ENCODE measurements at regions of chr6 and their contacts with region 1.

Region 1: GRCh38 chr6:3825851-3826581 is 23.2 kb upstream of the FAM50B start:
- DNase-seq: peak; percentile 90 to 99
- H3K4me3 ChIP-seq: peak overlapping the region; percentile 18 to 40
- H3K27ac ChIP-seq: peak overlapping the region; percentile 89 to 93
- H3K4me1 ChIP-seq: peaks cover 18 to 46% of the 10 kb centered on the region in 2 donors
- H3K27me3 ChIP-seq: no peaks in the 10 kb centered on the region
- CTCF ChIP-seq: no peak

Region 2: GRCh38 chr6:3471711-3472110 is 354.3 kb before region 1 on chr6:
- intact Hi-C with region 1: no loop called
- DNase-seq: no peak
- H3K4me3 ChIP-seq: no peak overlapping the region
- H3K27ac ChIP-seq: no peak overlapping the region
- H3K4me1 ChIP-seq: no peaks in the 10 kb centered on the region
- H3K27me3 ChIP-seq: no peaks in the 10 kb centered on the region
- CTCF ChIP-seq: no peak

Region 3: GRCh38 chr6:3751730-3752542 is 74.1 kb before region 1 on chr6:
- intact Hi-C with region 1: loop called (anchors 1 kb)
- DNase-seq: peak; percentile 59 to 96
- H3K4me3 ChIP-seq: peak overlapping the region; percentile 81 to 82
- H3K27ac ChIP-seq: peak overlapping the region; percentile 100
- H3K4me1 ChIP-seq: peaks cover 0 to 3% of the 10 kb centered on the region in 2 donors
- H3K27me3 ChIP-seq: no peaks in the 10 kb centered on the region
- CTCF ChIP-seq: peak; percentile 33 to 50 (median 47)

Region 4: DNA sequence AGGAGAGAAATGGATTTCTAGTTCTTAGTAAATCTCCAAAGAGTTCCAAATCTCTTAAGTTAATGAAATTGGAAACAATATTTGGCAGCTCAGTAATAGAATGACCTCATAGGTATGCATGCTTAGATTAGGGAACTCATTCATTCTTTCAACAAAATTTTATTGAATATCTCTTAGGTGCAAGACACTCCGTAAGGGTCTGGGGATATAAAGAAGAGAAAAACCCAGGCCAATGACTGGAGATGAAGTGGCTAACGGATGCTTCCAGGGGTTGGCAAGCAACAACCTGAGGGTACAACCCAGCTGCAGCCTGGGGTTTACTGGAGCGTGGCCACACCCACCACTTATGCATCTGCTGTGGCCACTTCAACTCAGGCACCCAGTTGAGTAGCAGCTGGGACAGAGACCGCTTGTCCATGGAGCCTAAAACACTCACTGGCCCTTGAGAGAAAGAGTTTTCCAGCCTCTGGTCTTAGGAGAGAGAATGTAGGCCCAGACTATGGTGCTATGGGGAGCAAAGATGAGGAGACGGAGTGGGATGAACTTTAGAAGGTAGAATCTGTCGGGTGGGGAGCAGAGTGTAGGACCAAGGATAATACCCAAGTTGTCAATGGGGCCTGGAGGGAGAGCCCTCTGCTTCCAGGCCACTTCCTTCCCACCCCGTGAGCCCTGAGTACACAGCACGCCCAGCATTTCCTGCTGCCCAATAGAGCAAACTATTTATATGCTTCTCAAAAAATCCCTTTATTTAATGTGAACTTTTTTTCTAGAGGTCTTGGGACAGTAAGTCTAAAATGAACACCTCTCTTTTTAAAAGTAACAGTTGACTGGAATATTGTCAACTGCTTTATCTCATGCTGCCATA is 27.7 kb before region 1 on chr6:
- intact Hi-C with region 1: loop called (anchors 1 kb)
- DNase-seq: no peak
- H3K4me3 ChIP-seq: no peak overlapping the region
- H3K27ac ChIP-seq: peak overlapping the region; percentile 19 to 61
- H3K4me1 ChIP-seq: peaks cover 11 to 29% of the 10 kb centered on the region in 2 donors
- H3K27me3 ChIP-seq: no peaks in the 10 kb centered on the region
- CTCF ChIP-seq: no peak

Region 5: DNA sequence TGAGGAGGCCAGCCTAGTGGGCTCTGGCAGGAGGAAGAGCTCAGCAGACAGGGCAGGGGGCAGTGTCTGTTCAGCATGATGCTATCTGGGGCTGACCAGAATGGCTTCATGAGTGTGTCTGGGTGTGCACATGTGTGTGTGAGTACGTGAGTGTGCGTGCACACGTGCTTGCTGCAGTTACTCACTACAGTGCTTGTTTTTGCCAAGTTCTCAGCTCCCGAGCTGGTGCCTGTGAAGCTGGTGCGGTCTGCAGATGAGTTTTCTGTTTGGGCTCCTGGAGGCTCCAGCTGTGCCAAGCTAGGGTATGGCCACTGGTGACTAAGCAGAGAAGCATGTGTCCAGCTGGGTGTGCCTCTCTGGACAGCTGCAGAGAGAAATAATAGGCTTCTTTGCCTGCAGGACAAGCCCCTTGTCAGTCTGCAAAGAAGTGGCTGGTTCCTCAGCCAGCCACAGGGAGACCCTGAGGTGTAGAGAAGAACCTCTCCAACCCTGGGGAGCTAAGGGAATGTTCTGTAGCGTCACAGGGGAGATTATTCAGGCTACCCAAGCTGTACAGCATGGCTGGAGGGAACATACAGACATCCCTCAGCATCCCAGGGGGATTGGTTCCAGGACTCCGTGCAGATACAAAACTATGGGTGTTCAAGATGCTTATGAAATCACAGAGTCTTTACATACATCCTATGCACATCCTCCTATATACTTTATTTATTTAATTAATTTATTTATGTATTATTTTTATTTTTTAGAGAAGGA is 17.1 kb before region 1 on chr6:
- intact Hi-C with region 1: loop called (anchors 2 kb)
- DNase-seq: peak; percentile 54 to 93
- H3K4me3 ChIP-seq: peak overlapping the region in 1 of 2 donors; percentile 3
- H3K27ac ChIP-seq: peak overlapping the region; percentile 86 to 94
- H3K4me1 ChIP-seq: peaks cover 13 to 47% of the 10 kb centered on the region in 2 donors
- H3K27me3 ChIP-seq: no peaks in the 10 kb centered on the region
- CTCF ChIP-seq: no peak

Region 6: GRCh38 chr6:3841711-3842565 is 15.9 kb after region 1 on chr6:
- intact Hi-C with region 1: loop called (anchors 1 kb)
- DNase-seq: peak in 1 of 2 donors; percentile 79
- H3K4me3 ChIP-seq: no peak overlapping the region
- H3K27ac ChIP-seq: peak overlapping the region; percentile 85 to 91
- H3K4me1 ChIP-seq: peaks cover 7 to 40% of the 10 kb centered on the region in 2 donors
- H3K27me3 ChIP-seq: no peaks in the 10 kb centered on the region
- CTCF ChIP-seq: no peak

Region 7: GRCh38 chr6:3868544-3868943 is 42.5 kb after region 1 on chr6:
- intact Hi-C with region 1: no loop called
- DNase-seq: no peak
- H3K4me3 ChIP-seq: no peak overlapping the region
- H3K27ac ChIP-seq: peak overlapping the region; percentile 39 to 41
- H3K4me1 ChIP-seq: peaks cover 0 to 7% of the 10 kb centered on the region in 2 donors
- H3K27me3 ChIP-seq: no peaks in the 10 kb centered on the region
- CTCF ChIP-seq: no peak

Region 8: DNA sequence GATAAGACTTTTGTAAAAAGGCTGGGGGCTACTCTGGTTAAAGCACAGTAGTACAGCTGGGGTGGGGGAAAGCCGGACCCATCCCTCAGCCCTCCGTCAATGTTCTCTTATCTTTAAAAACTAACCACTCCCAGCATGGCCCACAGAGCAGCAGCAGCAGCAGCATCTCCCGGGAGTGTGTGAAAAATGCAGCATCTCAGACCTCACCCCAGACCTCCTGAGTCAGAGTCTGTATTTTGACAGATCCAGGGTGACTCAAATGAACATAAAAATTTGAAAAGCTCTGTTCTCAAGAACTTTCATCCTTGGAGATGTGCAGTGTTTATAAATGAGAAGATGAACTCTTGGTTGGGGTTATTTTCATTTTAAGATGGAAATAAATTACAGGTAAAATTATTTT is 587.1 kb after region 1 on chr6:
- intact Hi-C with region 1: no loop called
- DNase-seq: no peak
- H3K4me3 ChIP-seq: no peak overlapping the region
- H3K27ac ChIP-seq: no peak overlapping the region
- H3K4me1 ChIP-seq: no peaks in the 10 kb centered on the region
- H3K27me3 ChIP-seq: no peaks in the 10 kb centered on the region
- CTCF ChIP-seq: no peak

Measured in ascending aorta (tissue), 2 donors.